Adrenal gland (tissue), 19 donors: ENCODE measurements at regions of chr4 and their contacts with region 1.

Region 1: DNA sequence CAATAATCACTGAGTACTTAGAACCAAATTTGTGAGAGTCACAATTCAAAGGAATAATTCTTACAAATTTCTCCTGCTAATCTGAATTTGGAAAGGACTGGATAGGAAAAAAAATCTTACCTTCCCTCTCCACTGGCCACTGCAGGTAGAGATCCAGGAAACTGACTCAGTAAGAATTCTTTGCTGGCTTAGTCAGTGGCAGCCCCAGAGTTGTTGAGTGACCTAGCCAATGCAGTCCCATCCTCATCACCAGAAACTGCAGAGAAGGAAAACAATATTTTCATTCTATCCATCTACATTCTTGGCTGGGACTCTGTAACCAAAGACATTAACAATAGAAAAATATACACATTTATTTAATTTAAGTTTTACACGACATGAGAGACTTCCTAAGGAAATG is 572.0 kb downstream of the ADGRL3 start:
- DNase-seq: no peak
- H3K4me3 ChIP-seq: no peak overlapping the region
- H3K27ac ChIP-seq: no peak overlapping the region
- H3K4me1 ChIP-seq: no peaks in the 10 kb centered on the region
- H3K27me3 ChIP-seq: no peaks in the 10 kb centered on the region
- CTCF ChIP-seq: no peak
- POLR2A ChIP-seq: no peak

Region 2: DNA sequence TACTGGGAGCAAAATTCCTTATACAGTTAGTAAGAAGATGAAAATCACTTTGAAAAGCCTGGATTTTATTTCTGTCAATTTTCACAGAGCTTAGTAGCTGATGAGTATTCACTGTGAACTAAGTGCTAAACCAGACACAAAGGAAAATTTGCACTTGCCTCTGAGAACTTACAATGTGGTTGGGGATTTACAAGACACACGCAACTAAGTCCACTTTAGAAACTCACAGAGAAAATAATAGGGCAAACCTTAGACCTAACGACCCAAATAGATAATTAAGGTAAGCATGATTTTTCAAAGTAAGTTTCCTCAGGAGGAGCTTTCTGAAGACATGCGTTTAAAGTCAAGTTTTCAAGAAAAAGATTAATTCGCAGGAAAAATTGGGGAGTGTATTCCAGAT is 136.9 kb after region 1 on chr4:
- intact Hi-C with region 1: loop called in 1 of 2 experiments (anchors 10 kb)
- DNase-seq: no peak
- H3K4me3 ChIP-seq: no peak overlapping the region
- H3K27ac ChIP-seq: no peak overlapping the region
- H3K4me1 ChIP-seq: no peaks in the 10 kb centered on the region
- H3K27me3 ChIP-seq: no peaks in the 10 kb centered on the region
- CTCF ChIP-seq: no peak
- POLR2A ChIP-seq: no peak